ENCODE measurements at regions of chr16 and their contacts with region 1.

Region 1: DNA sequence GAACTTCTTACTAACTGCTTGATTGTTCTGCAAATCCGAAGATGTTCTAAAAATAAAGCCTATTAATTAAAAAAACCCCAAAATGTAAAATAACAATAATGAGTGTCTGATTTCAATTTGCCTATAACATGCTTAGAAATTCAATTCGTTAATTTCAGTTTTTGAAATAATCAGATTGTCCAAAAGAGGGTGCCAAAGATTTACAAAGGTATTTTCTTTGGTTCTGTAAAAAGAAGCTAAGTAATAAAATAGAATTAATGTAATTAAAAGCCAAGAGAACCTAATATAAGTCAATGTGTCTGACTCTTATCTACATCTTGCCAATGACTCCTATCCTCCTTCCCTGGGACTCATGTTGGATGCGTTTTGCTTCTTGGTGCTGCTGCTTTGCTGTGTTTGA is 75.0 kb upstream of the CPHXL start:
- DNase-seq: no peak
- ATAC-seq: no peak
- H3K4me3 ChIP-seq: no peak overlapping the region
- H3K27ac ChIP-seq: no peak overlapping the region
- H3K4me1 ChIP-seq: no peaks in the 10 kb centered on the region
- H3K27me3 ChIP-seq: peaks cover 0 to 3% (median 0%) of the 10 kb centered on the region in 3 donors
- CTCF ChIP-seq: no peak

Region 2: GRCh38 chr16:75733305-75734211 is 67.7 kb before region 1 on chr16:
- intact Hi-C with region 1: no loop called
- DNase-seq: no peak
- ATAC-seq: no peak
- H3K4me3 ChIP-seq: no peak overlapping the region
- H3K27ac ChIP-seq: peak overlapping the region; percentile 27
- H3K4me1 ChIP-seq: no peaks in the 10 kb centered on the region
- H3K27me3 ChIP-seq: no peaks in the 10 kb centered on the region
- CTCF ChIP-seq: no peak

Region 3: DNA sequence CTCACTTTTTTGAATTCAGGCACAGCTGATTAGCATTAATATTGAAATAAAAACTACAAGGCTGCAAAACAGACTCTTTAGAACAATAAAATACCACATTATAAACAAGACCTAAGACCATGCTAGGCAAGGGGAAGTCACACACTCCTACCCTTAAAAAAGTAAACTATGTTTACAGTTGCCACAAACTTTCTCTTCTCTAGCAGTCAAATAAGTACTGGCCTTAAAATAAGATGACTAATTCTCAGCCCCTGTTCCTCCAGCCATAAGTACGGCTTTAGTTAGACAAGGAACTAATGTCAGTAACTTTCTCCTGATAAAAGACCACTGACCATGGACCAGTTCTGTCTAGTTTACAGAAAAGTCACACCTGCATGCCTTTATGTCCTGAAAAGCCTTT is 55.5 kb before region 1 on chr16:
- intact Hi-C with region 1: no loop called
- DNase-seq: no peak
- ATAC-seq: no peak
- H3K4me3 ChIP-seq: no peak overlapping the region
- H3K27ac ChIP-seq: no peak overlapping the region
- H3K4me1 ChIP-seq: no peaks in the 10 kb centered on the region
- H3K27me3 ChIP-seq: no peaks in the 10 kb centered on the region
- CTCF ChIP-seq: no peak

Region 4: DNA sequence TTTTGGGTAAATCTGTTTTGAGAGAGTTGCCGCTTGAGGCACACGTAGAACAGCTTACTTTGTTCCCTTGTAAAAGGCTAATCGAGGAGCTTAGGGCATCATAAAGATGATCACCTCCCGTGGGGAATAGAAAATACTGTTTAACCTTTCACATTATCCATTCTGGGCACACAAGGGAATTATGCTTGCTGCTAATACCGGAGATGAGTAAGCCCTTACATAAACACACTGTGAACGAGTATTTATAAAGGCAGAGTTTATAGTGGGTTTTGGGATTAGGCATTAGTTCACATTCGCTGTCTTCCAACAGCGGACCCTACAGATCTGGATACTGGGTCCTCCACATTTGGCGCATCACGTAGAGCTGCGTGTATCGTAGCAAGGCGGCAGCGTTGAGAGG is 424.7 kb after region 1 on chr16:
- intact Hi-C with region 1: loop called in 1 of 2 experiments (anchors 5 kb)
- DNase-seq: no peak
- ATAC-seq: no peak
- H3K4me3 ChIP-seq: no peak overlapping the region
- H3K27ac ChIP-seq: no peak overlapping the region
- H3K4me1 ChIP-seq: no peaks in the 10 kb centered on the region
- H3K27me3 ChIP-seq: no peaks in the 10 kb centered on the region
- CTCF ChIP-seq: no peak

Measured in psoas muscle (tissue), 8 donors.